ENCODE measurements at regions of chr19 and their contacts with region 1.

Region 1: GRCh38 chr19:50258918-50259372 is 55.5 kb downstream of the MYH14 start:
- DNase-seq: no peak
- ATAC-seq: peak; percentile 54
- H3K4me3 ChIP-seq: no peak overlapping the region
- H3K27ac ChIP-seq: no peak overlapping the region
- H3K4me1 ChIP-seq: no peaks in the 10 kb centered on the region
- H3K27me3 ChIP-seq: no peaks in the 10 kb centered on the region
- CTCF ChIP-seq: peak; percentile 40 to 65 (median 52); a peak in 5 of 6 replicates
- EP300 ChIP-seq: no peak
- POLR2A ChIP-seq: no peak
- RAD21 ChIP-seq: peak; percentile 40; the same call in 1 of the 2 replicates

Region 2: GRCh38 chr19:50147462-50148423 is 111.2 kb before region 1 on chr19:
- CTCF ChIA-PET with region 1: interaction called, 12 read pairs
- POLR2A ChIA-PET with region 1: no interaction called
- RAD21 ChIA-PET with region 1: interaction called, 5 read pairs
- SMC1A ChIA-PET with region 1: no interaction called
- in situ Hi-C with region 1: no loop called
- intact Hi-C with region 1: no loop called
- DNase-seq: peak; percentile 11
- ATAC-seq: peak; percentile 92
- H3K4me3 ChIP-seq: no peak overlapping the region
- H3K27ac ChIP-seq: no peak overlapping the region
- H3K4me1 ChIP-seq: no peaks in the 10 kb centered on the region
- H3K27me3 ChIP-seq: no peaks in the 10 kb centered on the region
- CTCF ChIP-seq: peak in 2 of 3 experiments; percentile 46 to 47; a peak in 3 of 6 replicates
- EP300 ChIP-seq: no peak
- POLR2A ChIP-seq: no peak
- RAD21 ChIP-seq: peak; percentile 44

Region 3: DNA sequence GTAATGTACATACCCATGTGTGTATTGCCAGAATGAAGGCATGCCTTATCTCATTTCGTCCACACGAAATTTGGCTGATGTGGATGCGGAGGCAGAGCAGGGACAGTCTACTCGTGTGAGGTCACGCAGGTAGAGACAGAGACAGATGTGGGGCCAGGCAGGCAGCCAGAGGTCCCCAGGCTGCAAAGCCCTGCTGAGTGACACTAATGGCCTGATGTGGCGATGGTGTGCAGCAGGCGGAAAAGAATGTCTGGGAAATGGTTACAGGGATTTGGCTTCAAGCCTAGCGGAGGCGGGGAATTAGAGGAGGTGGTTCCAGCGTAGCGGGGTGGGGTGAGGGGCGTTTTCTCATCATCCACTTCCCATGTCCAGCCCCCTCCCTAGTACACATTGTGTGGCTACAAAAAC is 91.6 kb before region 1 on chr19:
- CTCF ChIA-PET with region 1: interaction called, 13 read pairs
- POLR2A ChIA-PET with region 1: no interaction called
- RAD21 ChIA-PET with region 1: interaction called, 3 read pairs
- SMC1A ChIA-PET with region 1: no interaction called
- in situ Hi-C with region 1: no loop called
- intact Hi-C with region 1: loop called (anchors 5 kb)
- DNase-seq: no peak
- ATAC-seq: no peak
- H3K4me3 ChIP-seq: no peak overlapping the region
- H3K27ac ChIP-seq: no peak overlapping the region
- H3K4me1 ChIP-seq: no peaks in the 10 kb centered on the region
- H3K27me3 ChIP-seq: no peaks in the 10 kb centered on the region
- CTCF ChIP-seq: no peak
- EP300 ChIP-seq: no peak
- POLR2A ChIP-seq: no peak
- RAD21 ChIP-seq: no peak

Region 4: DNA sequence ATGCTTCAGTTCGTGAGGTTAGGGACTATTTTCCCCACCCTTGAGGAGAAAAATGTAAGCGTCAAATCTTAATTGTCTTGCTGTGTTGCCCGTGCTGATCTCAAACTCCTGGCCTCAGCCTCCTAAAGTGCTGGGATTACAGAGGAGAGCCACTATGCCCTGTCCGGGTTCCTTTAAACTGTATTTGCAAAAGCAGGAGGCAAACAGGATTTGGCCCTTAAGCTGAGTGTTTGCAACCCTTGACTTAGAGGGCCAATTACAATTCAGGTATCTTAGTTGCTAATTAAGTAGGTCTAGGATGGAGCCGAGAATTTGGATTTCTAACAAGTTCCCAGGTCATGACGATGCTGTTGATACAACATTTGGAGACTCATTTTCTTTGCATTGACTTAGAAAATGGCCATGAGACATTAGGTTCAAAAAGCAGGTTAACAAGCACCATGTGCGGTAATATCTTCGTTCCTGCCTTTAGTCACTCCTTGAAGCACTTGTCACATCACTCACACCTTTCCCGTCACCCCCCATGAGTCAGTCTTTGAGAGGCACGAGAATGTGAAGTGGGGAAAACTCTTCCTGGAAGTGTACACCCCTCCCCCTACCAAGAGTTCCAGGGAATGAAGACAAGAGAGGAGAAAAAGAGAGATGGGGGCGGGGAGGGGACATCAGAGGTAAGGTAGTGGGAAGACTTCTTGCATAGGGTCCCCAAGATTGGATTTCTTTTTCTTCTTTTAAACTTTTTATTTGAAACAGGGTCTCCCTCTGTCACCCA is 103.9 kb after region 1 on chr19:
- CTCF ChIA-PET with region 1: no interaction called
- POLR2A ChIA-PET with region 1: no interaction called
- RAD21 ChIA-PET with region 1: no interaction called
- SMC1A ChIA-PET with region 1: no interaction called
- in situ Hi-C with region 1: no loop called
- intact Hi-C with region 1: no loop called
- DNase-seq: no peak
- ATAC-seq: no peak
- H3K4me3 ChIP-seq: no peak overlapping the region
- H3K27ac ChIP-seq: no peak overlapping the region
- H3K4me1 ChIP-seq: peaks cover 64% of the 10 kb centered on the region
- H3K27me3 ChIP-seq: no peaks in the 10 kb centered on the region
- CTCF ChIP-seq: no peak
- EP300 ChIP-seq: no peak
- POLR2A ChIP-seq: no peak
- RAD21 ChIP-seq: no peak

Measured in GM12878 (cell line).